Left ventricle myocardium superior (tissue), 1 donor: ENCODE measurements at regions of chr11 and their contacts with region 1.

Region 1: DNA sequence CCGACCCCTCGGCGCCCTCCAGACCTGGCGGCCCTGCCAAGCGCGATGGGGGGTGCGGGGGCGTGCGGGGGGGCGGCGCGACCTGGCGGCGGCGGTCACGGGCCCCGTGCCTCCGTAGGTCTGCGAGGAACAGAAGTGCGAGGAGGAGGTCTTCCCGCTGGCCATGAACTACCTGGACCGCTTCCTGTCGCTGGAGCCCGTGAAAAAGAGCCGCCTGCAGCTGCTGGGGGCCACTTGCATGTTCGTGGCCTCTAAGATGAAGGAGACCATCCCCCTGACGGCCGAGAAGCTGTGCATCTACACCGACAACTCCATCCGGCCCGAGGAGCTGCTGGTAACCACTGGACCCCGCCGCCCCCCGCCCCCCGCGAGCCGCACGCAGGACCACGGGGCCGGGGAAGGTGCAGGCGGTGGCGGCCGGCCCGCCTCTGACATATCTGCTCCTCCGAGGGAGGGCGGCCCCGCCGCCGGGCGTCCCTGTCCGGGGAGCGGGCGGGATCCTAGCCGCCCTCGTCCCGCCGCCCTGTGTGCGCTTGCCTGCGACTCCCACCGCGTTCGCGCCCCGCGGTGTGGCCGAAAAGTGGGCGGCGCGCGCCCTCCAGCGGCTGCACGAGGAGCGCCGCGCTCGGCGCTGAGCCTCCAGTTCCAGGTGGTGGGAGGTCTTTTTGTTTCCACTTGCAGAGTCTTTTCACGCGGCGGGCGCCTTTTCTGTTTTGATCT is 2.1 kb downstream of the CCND1 start:
- DNase-seq: peak; percentile 92
- ATAC-seq: peak; percentile 72

Region 2: GRCh38 chr11:69101115-69101791 is 541.8 kb before region 1 on chr11:
- intact Hi-C with region 1: loop called (anchors 10 kb)
- DNase-seq: peak; percentile 86
- ATAC-seq: peak; percentile 89

Region 3: DNA sequence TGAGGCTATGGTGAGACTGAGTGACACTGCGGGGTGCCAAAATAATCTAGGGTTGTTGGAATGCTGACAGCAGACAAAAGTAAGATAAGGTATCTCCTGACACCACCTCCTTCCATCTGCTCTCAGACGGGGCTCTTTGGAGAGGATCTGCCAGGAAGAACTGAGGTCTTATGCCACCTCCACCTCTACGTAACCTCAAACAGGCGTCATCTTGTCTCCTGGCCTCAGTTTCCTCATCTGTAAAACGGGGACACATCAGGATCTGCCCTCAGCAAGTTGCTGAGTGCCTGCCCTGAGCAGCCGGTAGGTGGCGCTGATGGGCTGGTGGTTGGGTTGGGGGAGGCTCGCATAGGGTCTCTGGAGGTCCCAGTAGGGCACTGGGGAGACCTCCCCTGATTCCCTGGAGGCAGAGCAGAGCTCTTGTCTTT is 350.8 kb before region 1 on chr11:
- intact Hi-C with region 1: loop called (anchors 5 kb)
- DNase-seq: peak; percentile 66
- ATAC-seq: no peak

Region 4: DNA sequence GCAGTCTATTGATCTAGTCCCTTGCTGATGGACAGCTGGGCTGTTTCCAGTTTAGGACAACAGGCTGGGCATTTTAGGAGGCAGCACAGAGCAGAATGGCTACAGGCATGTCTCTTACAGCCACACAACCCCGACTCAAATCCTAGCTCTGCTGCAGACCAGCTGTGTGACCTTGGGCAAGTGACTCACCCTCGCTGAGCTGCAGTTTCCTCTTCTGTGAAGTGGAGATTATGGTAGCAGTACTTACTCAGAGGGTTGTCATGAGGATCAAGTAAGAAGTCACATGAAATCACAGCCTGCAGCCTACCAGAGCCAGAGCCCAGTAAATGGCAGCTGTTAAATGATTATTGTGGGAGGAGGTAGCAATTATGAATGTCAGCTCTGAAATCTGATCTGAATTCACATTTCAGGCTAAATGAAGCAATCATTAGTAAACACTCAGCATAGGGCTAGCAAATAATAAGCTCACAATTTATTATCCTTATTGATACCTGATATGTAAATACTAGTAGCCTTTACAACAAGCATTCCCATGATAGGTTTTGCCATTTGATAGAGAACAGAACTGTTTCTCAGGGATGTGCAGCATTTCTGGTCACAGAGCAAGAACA is 290.3 kb before region 1 on chr11:
- intact Hi-C with region 1: no loop called
- DNase-seq: no peak
- ATAC-seq: no peak

Region 5: GRCh38 chr11:69463181-69463994 is 179.7 kb before region 1 on chr11:
- intact Hi-C with region 1: no loop called
- DNase-seq: peak; percentile 64
- ATAC-seq: peak; percentile 77

Region 6: DNA sequence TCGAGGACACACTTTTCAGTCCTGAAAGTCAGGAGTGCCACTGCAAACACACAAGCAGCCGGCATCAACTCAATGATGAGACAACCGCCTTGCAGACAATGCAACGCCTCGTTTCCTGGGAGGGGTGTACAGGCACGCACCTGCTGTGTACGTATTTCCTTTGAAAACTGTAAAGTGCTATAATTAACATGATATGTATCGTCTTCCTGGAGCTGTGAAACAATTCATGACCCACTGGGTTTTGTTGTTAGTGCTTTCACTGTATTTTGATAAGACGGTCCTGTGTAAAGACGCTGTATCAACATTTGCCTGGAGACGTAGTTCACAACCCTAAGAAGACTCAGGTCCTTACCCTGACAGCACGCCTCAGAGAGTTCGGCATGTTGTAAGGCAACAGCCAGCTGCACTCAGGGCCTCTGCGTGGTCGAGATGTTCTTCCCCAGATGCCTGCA is 329.3 kb after region 1 on chr11:
- intact Hi-C with region 1: no loop called
- DNase-seq: peak; percentile 7
- ATAC-seq: no peak